ENCODE measurements at regions of chr11 and their contacts with region 1.

Region 1: GRCh38 chr11:35040221-35040942 is 98.6 kb upstream of the CD44 start:
- DNase-seq: peak; percentile 92
- H3K4me3 Mint-ChIP-seq: peak overlapping the region; percentile 69
- H3K27ac Mint-ChIP-seq: peak overlapping the region; percentile 86
- H3K4me1 Mint-ChIP-seq: peaks cover 29% of the 10 kb centered on the region
- H3K27me3 Mint-ChIP-seq: no peaks in the 10 kb centered on the region
- CTCF ChIP-seq: no peak

Region 2: DNA sequence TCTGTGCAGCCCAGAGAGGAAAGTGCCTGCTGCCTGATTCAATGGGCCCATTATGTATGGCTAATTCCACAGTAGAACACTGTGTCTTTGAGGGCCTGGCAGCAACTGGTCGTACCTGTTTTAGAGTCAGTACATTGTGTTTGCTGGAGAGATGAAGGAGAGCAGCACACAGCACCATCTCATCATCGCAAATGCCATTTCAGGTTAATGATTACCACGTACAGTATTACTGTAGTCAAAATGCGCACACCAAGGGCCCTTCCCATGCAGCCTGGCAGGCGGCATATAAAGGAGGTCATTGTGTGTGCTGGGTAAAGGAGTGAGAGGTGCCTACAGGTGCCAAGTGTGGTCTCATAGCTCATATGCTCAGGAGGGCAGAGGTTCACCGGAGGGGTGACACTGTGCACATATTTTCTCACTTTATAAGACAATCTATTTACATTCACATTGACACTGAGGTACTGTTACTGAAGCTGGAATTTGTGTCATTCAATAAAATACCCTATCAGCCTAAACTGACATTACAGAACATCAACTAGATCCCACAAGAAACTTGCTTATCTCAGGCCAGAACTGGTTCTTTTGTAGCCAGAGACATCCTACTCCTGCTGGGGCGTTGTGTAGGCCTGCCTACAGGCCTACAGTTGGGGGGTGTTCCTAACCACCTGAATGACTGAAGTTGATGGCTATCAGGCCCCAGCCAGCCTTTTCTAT is 214.6 kb before region 1 on chr11:
- CTCF ChIA-PET with region 1: no interaction called
- POLR2A ChIA-PET with region 1: no interaction called
- intact Hi-C with region 1: no loop called
- DNase-seq: no peak
- H3K4me3 Mint-ChIP-seq: no peak overlapping the region
- H3K27ac Mint-ChIP-seq: no peak overlapping the region
- H3K4me1 Mint-ChIP-seq: no peaks in the 10 kb centered on the region
- H3K27me3 Mint-ChIP-seq: no peaks in the 10 kb centered on the region
- CTCF ChIP-seq: no peak

Region 3: DNA sequence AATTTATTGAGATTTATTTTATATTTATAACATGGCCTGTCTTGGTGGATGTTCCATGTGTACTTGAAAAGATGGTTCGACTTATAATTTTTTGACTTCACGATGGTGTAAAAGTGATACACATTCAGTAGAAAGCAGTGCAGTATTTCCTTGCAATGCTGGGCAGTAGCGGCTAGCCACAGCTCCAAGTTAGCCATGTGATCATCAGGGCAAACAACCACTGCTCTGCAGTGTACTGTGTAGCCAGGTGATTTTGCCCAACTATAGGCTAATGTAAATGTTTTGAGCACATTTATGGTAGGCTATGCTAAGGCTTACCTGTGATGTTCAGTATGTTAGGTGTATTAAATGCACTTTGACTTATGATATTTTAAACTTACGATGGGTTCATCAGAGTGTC is 71.5 kb before region 1 on chr11:
- CTCF ChIA-PET with region 1: no interaction called
- POLR2A ChIA-PET with region 1: no interaction called
- intact Hi-C with region 1: no loop called
- DNase-seq: no peak
- H3K4me3 Mint-ChIP-seq: no peak overlapping the region
- H3K27ac Mint-ChIP-seq: no peak overlapping the region
- H3K4me1 Mint-ChIP-seq: no peaks in the 10 kb centered on the region
- H3K27me3 Mint-ChIP-seq: no peaks in the 10 kb centered on the region
- CTCF ChIP-seq: no peak

Region 4: DNA sequence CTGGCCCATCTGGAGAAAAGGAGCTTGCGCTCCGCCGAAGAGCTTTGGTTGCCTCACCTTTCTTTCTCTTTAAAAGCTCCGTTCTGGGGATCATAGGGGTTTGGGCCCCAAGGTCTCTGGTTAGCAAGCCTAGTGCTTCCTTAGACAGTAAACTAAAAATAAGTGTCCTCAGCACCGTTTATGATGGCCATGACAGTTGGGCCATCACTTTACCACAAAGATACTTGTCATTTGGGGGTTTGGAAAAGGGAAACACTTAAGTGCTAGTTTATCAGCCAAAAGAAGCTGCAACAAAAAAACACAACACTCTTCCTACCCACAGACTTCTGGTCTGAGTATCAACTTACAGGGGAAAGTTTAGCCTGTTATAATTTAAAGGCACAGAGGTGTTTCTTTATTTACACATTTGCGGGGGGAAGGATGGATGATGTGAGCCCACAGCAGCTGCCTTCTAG is 10.2 kb after region 1 on chr11:
- CTCF ChIA-PET with region 1: interaction called, 7 read pairs
- POLR2A ChIA-PET with region 1: interaction called, 13 read pairs
- intact Hi-C with region 1: no loop called
- DNase-seq: no peak
- H3K4me3 Mint-ChIP-seq: no peak overlapping the region
- H3K27ac Mint-ChIP-seq: no peak overlapping the region
- H3K4me1 Mint-ChIP-seq: no peaks in the 10 kb centered on the region
- H3K27me3 Mint-ChIP-seq: no peaks in the 10 kb centered on the region
- CTCF ChIP-seq: no peak

Region 5: GRCh38 chr11:35082321-35083182 is 42.2 kb after region 1 on chr11:
- CTCF ChIA-PET with region 1: no interaction called
- POLR2A ChIA-PET with region 1: interaction called, 8 read pairs
- intact Hi-C with region 1: loop called (anchors 2 kb)
- DNase-seq: peak; percentile 86
- H3K4me3 Mint-ChIP-seq: peak overlapping the region; percentile 24
- H3K27ac Mint-ChIP-seq: peak overlapping the region; percentile 73
- H3K4me1 Mint-ChIP-seq: peaks cover 39% of the 10 kb centered on the region
- H3K27me3 Mint-ChIP-seq: no peaks in the 10 kb centered on the region
- CTCF ChIP-seq: no peak

Measured in MCF 10A (cell line).